Right cardiac atrium (tissue), 5 donors: ENCODE measurements at regions of chr3 and their contacts with region 1.

Region 1: GRCh38 chr3:72996473-72997333 is at the start of gene PPP4R2:
- DNase-seq: peak; percentile 91 to 96 (median 96)
- ATAC-seq: peak; percentile 98 to 99
- H3K4me3 ChIP-seq: peak within 1 kb of the TSS; percentile 99
- H3K27ac ChIP-seq: peak within 1 kb of the TSS; percentile 95
- H3K4me1 ChIP-seq: peaks cover 6% of the 10 kb centered on the region
- H3K27me3 ChIP-seq: no peaks in the 10 kb centered on the region
- total RNA-seq, gene PPP4R2: 52.0 to 73.7 (median 71.8) TPM

Region 2: GRCh38 chr3:72949016-72949415 is 47.7 kb before region 1 on chr3:
- intact Hi-C with region 1: loop called in 3 of 4 experiments (anchors 5 to 10 kb)
- DNase-seq: no peak
- ATAC-seq: peak; percentile 45 to 69
- H3K4me3 ChIP-seq: no peak overlapping the region
- H3K27ac ChIP-seq: peak overlapping the region; percentile 48
- H3K4me1 ChIP-seq: peaks cover 6% of the 10 kb centered on the region
- H3K27me3 ChIP-seq: no peaks in the 10 kb centered on the region

Region 3: GRCh38 chr3:72960812-72961518 is 35.7 kb before region 1 on chr3:
- intact Hi-C with region 1: no loop called
- DNase-seq: peak in 2 of 3 donors; percentile 57 to 72
- ATAC-seq: peak; percentile 89 to 90
- H3K4me3 ChIP-seq: no peak overlapping the region
- H3K27ac ChIP-seq: peak overlapping the region; percentile 63
- H3K4me1 ChIP-seq: peaks cover 10% of the 10 kb centered on the region
- H3K27me3 ChIP-seq: no peaks in the 10 kb centered on the region

Region 4: GRCh38 chr3:73041537-73041936 is 44.8 kb after region 1 on chr3:
- intact Hi-C with region 1: loop called in 1 of 4 experiments (anchors 10 kb)
- DNase-seq: peak in 1 of 3 donors; percentile 71
- ATAC-seq: peak in 1 of 2 donors; percentile 30
- H3K4me3 ChIP-seq: no peak overlapping the region
- H3K27ac ChIP-seq: no peak overlapping the region
- H3K4me1 ChIP-seq: peaks cover 4% of the 10 kb centered on the region
- H3K27me3 ChIP-seq: no peaks in the 10 kb centered on the region

Region 5: GRCh38 chr3:73056014-73056844 is 59.5 kb after region 1 on chr3:
- intact Hi-C with region 1: loop called in 1 of 4 experiments (anchors 5 kb)
- DNase-seq: no peak
- ATAC-seq: peak in 1 of 2 donors; percentile 52
- H3K4me3 ChIP-seq: no peak overlapping the region
- H3K27ac ChIP-seq: no peak overlapping the region
- H3K4me1 ChIP-seq: no peaks in the 10 kb centered on the region
- H3K27me3 ChIP-seq: no peaks in the 10 kb centered on the region